ENCODE measurements at regions of chr15 and their contacts with region 1.

Region 1: GRCh38 chr15:51776952-51777574 is 25.7 kb downstream of the TMOD2 start:
- DNase-seq: peak in 1 of 2 experiments; percentile 63
- H3K4me3 ChIP-seq: no peak overlapping the region
- H3K27ac ChIP-seq: no peak overlapping the region
- H3K4me1 ChIP-seq: peaks cover 0 to 2% (median 0%) of the 10 kb centered on the region in 4 experiments; a peak in 2 of 7 replicates
- H3K27me3 ChIP-seq: no peaks in the 10 kb centered on the region
- CTCF ChIP-seq: peak in 2 of 3 experiments; percentile 85 to 87; a peak in 3 of 4 replicates
- EP300 ChIP-seq: no peak
- POLR2A ChIP-seq: no peak
- RAD21 ChIP-seq: peak; percentile 61 to 71

Region 2: GRCh38 chr15:51629612-51630011 is 147.5 kb before region 1 on chr15:
- CTCF ChIA-PET with region 1: interaction called, 16 read pairs
- POLR2A ChIA-PET with region 1: no interaction called
- DNase-seq: no peak
- H3K4me3 ChIP-seq: no peak overlapping the region
- H3K27ac ChIP-seq: no peak overlapping the region
- H3K4me1 ChIP-seq: no peaks in the 10 kb centered on the region; a peak in 1 of 7 replicates
- H3K27me3 ChIP-seq: peaks cover 0 to 3% (median 0%) of the 10 kb centered on the region in 4 experiments; a peak in 1 of 7 replicates
- CTCF ChIP-seq: no peak
- EP300 ChIP-seq: no peak
- POLR2A ChIP-seq: no peak
- RAD21 ChIP-seq: no peak

Region 3: DNA sequence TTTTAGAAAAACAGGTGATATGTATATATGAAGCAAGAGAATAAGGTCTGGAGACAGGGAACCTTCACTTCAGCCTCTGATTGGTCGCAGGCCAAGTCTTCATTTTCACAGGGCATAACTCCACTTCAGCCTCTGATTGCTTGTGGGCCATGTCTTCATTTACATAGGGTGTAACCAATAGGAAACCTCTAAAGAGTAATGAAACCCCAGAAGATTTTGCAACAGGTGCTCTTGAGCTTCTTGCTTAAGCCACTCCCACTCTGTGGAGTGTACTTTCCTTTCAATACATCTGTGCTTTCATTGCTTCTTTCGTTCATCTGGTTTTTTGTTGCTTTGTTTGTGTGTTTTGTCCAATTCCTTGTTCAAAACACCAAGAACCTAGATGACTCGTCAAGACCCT is 118.4 kb before region 1 on chr15:
- CTCF ChIA-PET with region 1: interaction called, 63 read pairs
- POLR2A ChIA-PET with region 1: no interaction called
- DNase-seq: no peak
- H3K4me3 ChIP-seq: no peak overlapping the region
- H3K27ac ChIP-seq: no peak overlapping the region
- H3K4me1 ChIP-seq: no peaks in the 10 kb centered on the region; a peak in 1 of 7 replicates
- H3K27me3 ChIP-seq: no peaks in the 10 kb centered on the region
- CTCF ChIP-seq: no peak
- EP300 ChIP-seq: no peak
- POLR2A ChIP-seq: no peak
- RAD21 ChIP-seq: no peak

Region 4: DNA sequence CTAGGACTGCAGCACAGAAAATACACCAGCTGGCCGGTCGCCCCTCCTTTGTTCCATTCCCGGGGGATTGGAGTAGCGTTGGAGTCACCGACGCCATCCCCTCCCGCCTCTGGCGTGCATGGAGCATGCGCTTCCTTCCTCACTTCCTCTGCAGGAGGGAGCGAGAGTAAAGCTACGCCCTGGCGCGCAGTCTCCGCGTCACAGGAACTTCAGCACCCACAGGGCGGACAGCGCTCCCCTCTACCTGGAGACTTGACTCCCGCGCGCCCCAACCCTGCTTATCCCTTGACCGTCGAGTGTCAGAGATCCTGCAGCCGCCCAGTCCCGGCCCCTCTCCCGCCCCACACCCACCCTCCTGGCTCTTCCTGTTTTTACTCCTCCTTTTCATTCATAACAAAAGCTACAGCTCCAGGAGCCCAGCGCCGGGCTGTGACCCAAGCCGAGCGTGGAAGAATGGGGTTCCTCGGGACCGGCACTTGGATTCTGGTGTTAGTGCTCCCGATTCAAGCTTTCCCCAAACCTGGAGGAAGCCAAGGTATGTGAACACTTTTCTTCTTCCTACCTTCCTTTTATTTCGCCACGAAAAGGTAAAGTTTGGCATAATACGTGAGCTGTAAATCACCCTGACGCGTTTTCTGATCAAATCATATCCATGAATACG is 95.6 kb before region 1 on chr15 and contains the start of gene SCG3:
- CTCF ChIA-PET with region 1: interaction called, 34 read pairs
- POLR2A ChIA-PET with region 1: interaction called, 4 read pairs
- DNase-seq: peak; percentile 94 to 99
- H3K4me3 ChIP-seq: peak within 1 kb of the TSS; percentile 59 to 91 (median 80)
- H3K27ac ChIP-seq: 0 out of 2 replicates have a peak within 1 kb of the TSS, but pooled peaks have one; percentile 55
- H3K4me1 ChIP-seq: no peaks in the 10 kb centered on the region
- H3K27me3 ChIP-seq: no peaks in the 10 kb centered on the region
- CTCF ChIP-seq: no peak
- EP300 ChIP-seq: 0 out of 3 replicates have a peak, but pooled peaks of 1 of the 2 experiments have one; percentile 50
- POLR2A ChIP-seq: peak; percentile 50 to 85
- RAD21 ChIP-seq: peak in 1 of 2 experiments; percentile 1; a peak in 2 of 4 replicates
- total RNA-seq, gene SCG3: 42.4 and 45.9 TPM in 2 replicates

Region 5: DNA sequence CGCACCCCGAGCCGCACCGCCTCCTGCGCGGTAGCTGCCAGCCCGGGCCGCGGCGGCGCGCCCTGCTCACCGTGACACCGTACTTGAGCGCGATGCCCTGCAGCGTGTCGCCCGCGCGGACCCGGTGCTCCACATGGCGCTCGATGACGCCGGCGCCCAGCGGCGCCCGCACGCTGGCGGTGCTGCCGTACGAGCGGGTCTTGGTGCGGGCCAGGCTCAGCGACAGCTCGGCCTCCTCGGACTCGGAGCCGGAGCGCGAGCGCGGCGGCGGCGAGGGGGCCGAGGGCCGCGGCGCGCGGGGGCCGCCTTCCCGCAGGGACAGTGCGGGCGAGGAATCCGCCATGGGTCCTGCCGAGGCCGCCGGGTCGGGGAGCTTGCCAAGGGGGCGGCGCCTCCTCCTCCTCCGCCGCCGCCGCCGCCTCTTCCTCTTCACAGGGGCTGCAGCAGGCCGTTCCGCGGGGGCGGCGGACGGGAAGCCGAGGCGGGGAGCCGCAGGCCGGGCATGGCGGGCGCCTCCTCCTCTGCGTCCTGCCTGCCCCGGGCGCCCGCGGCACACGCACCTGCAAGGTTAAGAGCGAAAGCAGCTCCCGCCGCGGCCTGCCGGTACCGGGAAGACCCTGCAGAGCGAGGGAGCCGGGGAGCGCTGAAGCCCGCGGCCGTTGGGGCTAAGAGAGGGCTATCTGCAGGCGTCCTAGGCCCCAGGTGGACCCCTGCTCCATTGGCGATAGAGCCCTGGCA is 39.6 kb before region 1 on chr15 and contains the start of gene LYSMD2:
- CTCF ChIA-PET with region 1: interaction called, 22 read pairs
- POLR2A ChIA-PET with region 1: no interaction called
- DNase-seq: peak in 1 of 2 experiments; percentile 68
- H3K4me3 ChIP-seq: peak within 1 kb of the TSS; percentile 55 to 66 (median 58)
- H3K27ac ChIP-seq: no peak within 1 kb of the TSS
- H3K4me1 ChIP-seq: peaks cover 0 to 4% (median 0%) of the 10 kb centered on the region in 4 experiments; a peak in 1 of 7 replicates
- H3K27me3 ChIP-seq: peaks cover 6 to 32% (median 19%) of the 10 kb centered on the region in 4 experiments
- CTCF ChIP-seq: no peak
- EP300 ChIP-seq: no peak
- POLR2A ChIP-seq: no peak; a peak in 1 of 3 replicates
- RAD21 ChIP-seq: 0 out of 4 replicates have a peak, but pooled peaks of 1 of the 2 experiments have one; percentile 1
- total RNA-seq, gene LYSMD2: 2.7 and 3.2 TPM in 2 replicates

Region 6: DNA sequence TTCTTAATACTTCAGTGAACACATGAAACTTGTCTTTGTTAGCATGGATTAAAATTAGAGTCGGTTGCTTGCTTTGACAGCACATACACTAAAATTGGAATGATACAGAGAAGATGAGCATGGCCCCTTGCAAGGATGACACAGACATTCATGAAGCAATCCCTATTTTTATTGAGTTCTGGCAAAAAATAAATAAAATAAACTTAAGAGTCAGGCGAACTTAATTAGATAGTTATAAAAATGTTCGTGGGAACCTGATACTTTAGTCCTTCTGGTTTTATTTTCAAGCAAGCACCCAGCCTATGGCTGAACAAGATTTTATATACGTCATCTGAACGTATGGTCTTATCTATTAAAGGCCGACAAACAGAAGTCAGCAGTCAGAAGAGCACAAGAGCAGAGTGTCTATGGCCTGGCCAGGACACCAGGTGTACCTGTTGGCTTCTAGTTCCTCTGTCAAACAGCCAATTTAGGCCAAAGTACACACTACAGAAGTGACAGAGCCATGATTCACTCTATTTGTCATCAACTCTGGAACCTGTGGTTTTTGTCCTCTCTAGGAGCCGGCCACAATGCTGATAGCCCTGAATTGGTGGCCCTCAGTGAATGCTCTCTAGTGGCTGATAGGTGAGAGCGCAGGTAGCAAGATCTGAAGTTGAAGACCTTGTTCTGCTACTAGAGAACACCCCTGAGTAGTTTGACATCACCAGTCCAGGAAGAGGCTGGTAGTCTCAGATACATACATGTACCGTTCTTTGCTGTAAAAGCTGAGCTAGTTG is 130.3 kb after region 1 on chr15:
- CTCF ChIA-PET with region 1: interaction called, 12 read pairs
- POLR2A ChIA-PET with region 1: no interaction called
- DNase-seq: no peak
- H3K4me3 ChIP-seq: no peak overlapping the region
- H3K27ac ChIP-seq: no peak overlapping the region; the same call in 1 of the 2 replicates
- H3K4me1 ChIP-seq: no peaks in the 10 kb centered on the region
- H3K27me3 ChIP-seq: peaks cover 0 to 1% (median 0%) of the 10 kb centered on the region in 4 experiments; a peak in 1 of 7 replicates
- CTCF ChIP-seq: peak; percentile 16 to 57 (median 48)
- EP300 ChIP-seq: no peak
- POLR2A ChIP-seq: no peak
- RAD21 ChIP-seq: peak; percentile 23 to 42; a peak in 3 of 4 replicates

Measured in H1 (cell line).